ENCODE measurements at regions of chr19 and their contacts with region 1.

Region 1: GRCh38 chr19:33176670-33177416 is 17.3 kb upstream of the LRP3 start:
- DNase-seq: peak; percentile 95 to 99 (median 98)
- ATAC-seq: peak; percentile 87 to 95 (median 89)
- H3K4me3 ChIP-seq: peak overlapping the region; percentile 66 to 81 (median 76)
- H3K27ac ChIP-seq: peak overlapping the region; percentile 89 to 96 (median 94)
- H3K4me1 ChIP-seq: peaks cover 0 to 20% (median 0%) of the 10 kb centered on the region in 3 donors
- H3K27me3 ChIP-seq: no peaks in the 10 kb centered on the region
- CTCF ChIP-seq: no peak

Region 2: GRCh38 chr19:33143897-33144405 is 32.9 kb before region 1 on chr19:
- intact Hi-C with region 1: loop called in 1 of 3 experiments (anchors 5 kb)
- DNase-seq: peak in 5 of 6 donors; percentile 23 to 76 (median 61)
- ATAC-seq: peak; percentile 97 to 100 (median 98)
- H3K4me3 ChIP-seq: peak overlapping the region in 1 of 4 donors; percentile 4
- H3K27ac ChIP-seq: no peak overlapping the region
- H3K4me1 ChIP-seq: no peaks in the 10 kb centered on the region
- H3K27me3 ChIP-seq: no peaks in the 10 kb centered on the region
- CTCF ChIP-seq: peak; percentile 82 to 94 (median 90)

Region 3: DNA sequence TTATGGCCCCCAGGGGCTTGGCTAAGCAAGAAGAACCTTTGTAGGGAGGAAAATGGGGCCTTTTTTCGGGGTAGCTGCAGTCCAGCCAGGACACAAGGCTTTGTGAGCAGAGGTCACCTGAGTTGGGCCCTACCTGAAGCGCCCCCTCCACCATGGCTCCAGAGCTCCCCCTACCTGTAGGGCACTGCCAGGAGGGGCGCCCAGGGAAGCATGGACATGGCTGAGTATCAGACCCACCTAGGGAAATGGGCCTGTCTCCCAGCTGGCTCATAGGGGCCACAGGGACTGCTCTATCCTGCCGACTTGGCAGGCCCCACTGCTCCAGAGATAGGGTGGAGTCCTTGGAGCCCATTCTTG is 134.5 kb after region 1 on chr19:
- intact Hi-C with region 1: no loop called
- DNase-seq: peak; percentile 62 to 86 (median 69)
- ATAC-seq: peak; percentile 75 to 88 (median 82)
- H3K4me3 ChIP-seq: peak overlapping the region in 1 of 4 donors; percentile 11
- H3K27ac ChIP-seq: peak overlapping the region; percentile 24 to 70 (median 56)
- H3K4me1 ChIP-seq: peaks cover 7 to 23% (median 16%) of the 10 kb centered on the region in 3 donors
- H3K27me3 ChIP-seq: no peaks in the 10 kb centered on the region
- CTCF ChIP-seq: peak; percentile 30 to 47 (median 39)

Region 4: DNA sequence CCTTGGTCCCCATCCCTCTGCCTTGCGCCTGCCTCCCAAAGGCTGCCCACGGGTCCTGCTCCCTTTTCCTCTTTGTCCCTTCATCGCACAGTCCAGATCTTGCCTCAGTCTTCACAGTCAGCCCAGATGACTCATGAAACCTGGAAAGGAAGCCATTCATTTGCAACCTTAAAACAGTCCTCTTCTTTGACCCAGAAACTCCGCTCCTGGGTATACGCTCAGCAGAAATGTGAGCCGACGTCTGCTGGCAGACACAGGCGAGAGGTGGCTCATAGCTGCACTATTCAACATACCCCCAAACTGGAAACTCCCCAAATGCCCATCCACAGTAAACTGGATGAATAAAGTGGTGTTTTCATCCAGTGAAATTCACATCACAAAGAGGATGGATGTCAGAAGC is 358.4 kb after region 1 on chr19:
- intact Hi-C with region 1: no loop called
- DNase-seq: no peak
- ATAC-seq: no peak
- H3K4me3 ChIP-seq: no peak overlapping the region
- H3K27ac ChIP-seq: no peak overlapping the region
- H3K4me1 ChIP-seq: no peaks in the 10 kb centered on the region
- H3K27me3 ChIP-seq: peaks cover 0 to 2% (median 0%) of the 10 kb centered on the region in 4 donors
- CTCF ChIP-seq: no peak

Measured in pancreas (tissue), 10 donors.